H1 (cell line): ENCODE measurements at regions of chr3 and their contacts with region 1.

Region 1: GRCh38 chr3:151345859-151346258 is 16.5 kb upstream of the P2RY13 start:
- DNase-seq: no peak
- H3K4me3 ChIP-seq: no peak overlapping the region
- H3K27ac ChIP-seq: no peak overlapping the region
- H3K4me1 ChIP-seq: peaks cover 0 to 10% (median 5%) of the 10 kb centered on the region in 4 experiments; a peak in 3 of 7 replicates
- H3K27me3 ChIP-seq: peaks cover 0 to 1% (median 0%) of the 10 kb centered on the region in 4 experiments; a peak in 1 of 7 replicates
- CTCF ChIP-seq: no peak
- EP300 ChIP-seq: no peak
- POLR2A ChIP-seq: no peak
- RAD21 ChIP-seq: no peak

Region 2: DNA sequence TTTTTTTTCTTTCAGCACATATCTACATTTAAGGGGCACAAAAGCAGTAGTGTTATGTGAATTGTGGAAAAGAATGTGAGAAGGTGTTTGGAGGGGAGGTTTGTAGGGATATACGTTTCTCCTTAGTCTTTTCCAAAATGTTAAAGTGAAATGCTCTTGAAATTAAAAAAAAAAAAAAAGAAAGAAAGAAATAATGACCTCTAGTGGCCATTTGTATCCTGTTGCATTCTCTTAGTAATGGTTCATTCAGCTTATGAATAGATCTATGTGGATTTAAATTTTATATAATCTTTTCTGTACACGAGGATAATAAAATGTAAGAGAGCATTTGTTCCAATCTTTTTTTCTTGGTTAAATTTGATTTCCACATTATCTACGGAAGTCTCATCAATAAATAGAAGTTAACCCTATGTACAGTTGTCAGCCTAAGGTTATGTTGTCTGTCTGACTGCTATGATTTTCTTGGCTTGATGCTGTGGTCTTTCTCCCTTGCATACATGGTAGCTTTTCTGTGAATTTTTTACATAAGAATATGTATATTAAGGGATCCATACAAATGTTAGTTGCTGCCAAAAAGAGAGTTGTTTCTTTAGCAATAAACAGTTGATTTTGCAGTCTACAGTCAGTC is 18.2 kb before region 1 on chr3:
- CTCF ChIA-PET with region 1: interaction called, 10 read pairs
- POLR2A ChIA-PET with region 1: no interaction called
- DNase-seq: no peak
- H3K4me3 ChIP-seq: no peak overlapping the region
- H3K27ac ChIP-seq: no peak overlapping the region
- H3K4me1 ChIP-seq: no peaks in the 10 kb centered on the region; a peak in 2 of 7 replicates
- H3K27me3 ChIP-seq: no peaks in the 10 kb centered on the region
- CTCF ChIP-seq: no peak; a peak in 1 of 4 replicates
- EP300 ChIP-seq: no peak
- POLR2A ChIP-seq: no peak
- RAD21 ChIP-seq: peak in 1 of 2 experiments; percentile 6; a peak in 1 of 4 replicates

Region 3: GRCh38 chr3:151501923-151502632 is 156.2 kb after region 1 on chr3:
- CTCF ChIA-PET with region 1: no interaction called
- POLR2A ChIA-PET with region 1: no interaction called
- DNase-seq: no peak
- H3K4me3 ChIP-seq: no peak overlapping the region
- H3K27ac ChIP-seq: no peak overlapping the region
- H3K4me1 ChIP-seq: no peaks in the 10 kb centered on the region; a peak in 1 of 7 replicates
- H3K27me3 ChIP-seq: no peaks in the 10 kb centered on the region
- CTCF ChIP-seq: no peak
- EP300 ChIP-seq: no peak
- POLR2A ChIP-seq: no peak
- RAD21 ChIP-seq: no peak